Kidney (tissue), 22 donors: ENCODE measurements at regions of chr2 and their contacts with region 1.

Region 1: GRCh38 chr2:19863303-19864041 is 38.3 kb downstream of the TTC32 start:
- DNase-seq: peak; percentile 72 to 89 (median 76)
- H3K4me3 ChIP-seq: peak overlapping the region in 2 of 3 donors; percentile 42 to 48
- H3K27ac ChIP-seq: peak overlapping the region in 1 of 2 donors; percentile 16
- H3K4me1 ChIP-seq: peaks cover 0 to 4% (median 0%) of the 10 kb centered on the region in 3 donors
- H3K27me3 ChIP-seq: no peaks in the 10 kb centered on the region
- CTCF ChIP-seq: peak; percentile 93

Region 2: DNA sequence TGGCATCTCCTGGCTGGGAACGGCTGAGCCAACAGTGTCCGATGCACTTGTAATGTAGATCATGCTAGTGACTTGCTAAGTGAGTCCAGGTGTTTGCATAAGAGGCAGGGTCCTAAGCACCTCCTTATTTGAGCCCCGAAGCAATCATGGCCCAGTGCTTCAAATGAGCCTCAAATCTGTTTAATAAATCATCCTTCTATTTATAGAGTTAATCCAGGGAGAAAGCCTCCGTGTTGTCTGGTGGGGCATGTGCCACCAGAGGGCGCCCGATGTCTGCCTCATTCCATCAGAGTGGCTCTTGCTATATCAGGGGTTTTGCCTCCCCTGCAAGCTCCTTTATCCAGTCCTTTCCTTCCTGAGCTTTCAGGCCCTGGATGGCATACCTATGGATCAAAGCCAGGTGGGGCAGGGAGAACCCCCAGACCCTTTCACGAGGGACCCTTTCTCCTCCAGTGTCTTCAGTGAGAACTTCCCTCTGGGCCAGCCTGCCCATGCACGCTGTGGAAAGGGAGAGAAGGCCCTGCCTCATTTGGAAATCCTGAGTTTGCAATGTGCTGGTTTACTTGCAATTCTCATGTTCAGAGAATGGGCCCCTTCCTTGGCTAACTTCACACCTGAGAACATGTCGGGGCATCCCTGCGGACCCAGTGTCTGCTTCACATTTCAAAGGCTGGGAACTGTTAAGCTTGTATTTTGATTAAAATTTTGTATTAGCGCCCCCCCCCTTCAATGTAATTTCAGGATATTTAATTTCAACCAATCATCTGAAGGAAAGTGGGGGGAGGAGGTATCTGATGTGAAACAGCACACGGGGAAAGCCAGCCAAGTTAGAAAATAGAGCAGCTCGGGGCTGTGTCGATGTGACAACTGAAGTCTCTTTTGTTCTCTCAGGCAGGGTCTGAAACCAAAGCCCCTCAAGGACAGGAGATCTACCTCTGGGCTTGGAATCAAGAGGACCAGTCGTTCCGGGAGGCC is 1342.7 kb before region 1 on chr2:
- intact Hi-C with region 1: loop called (anchors 5 kb)
- DNase-seq: peak; percentile 87 to 93 (median 91)
- H3K4me3 ChIP-seq: no peak overlapping the region
- H3K27ac ChIP-seq: no peak overlapping the region
- H3K4me1 ChIP-seq: peaks cover 0 to 5% (median 0%) of the 10 kb centered on the region in 3 donors
- H3K27me3 ChIP-seq: no peaks in the 10 kb centered on the region
- CTCF ChIP-seq: peak; percentile 86

Region 3: DNA sequence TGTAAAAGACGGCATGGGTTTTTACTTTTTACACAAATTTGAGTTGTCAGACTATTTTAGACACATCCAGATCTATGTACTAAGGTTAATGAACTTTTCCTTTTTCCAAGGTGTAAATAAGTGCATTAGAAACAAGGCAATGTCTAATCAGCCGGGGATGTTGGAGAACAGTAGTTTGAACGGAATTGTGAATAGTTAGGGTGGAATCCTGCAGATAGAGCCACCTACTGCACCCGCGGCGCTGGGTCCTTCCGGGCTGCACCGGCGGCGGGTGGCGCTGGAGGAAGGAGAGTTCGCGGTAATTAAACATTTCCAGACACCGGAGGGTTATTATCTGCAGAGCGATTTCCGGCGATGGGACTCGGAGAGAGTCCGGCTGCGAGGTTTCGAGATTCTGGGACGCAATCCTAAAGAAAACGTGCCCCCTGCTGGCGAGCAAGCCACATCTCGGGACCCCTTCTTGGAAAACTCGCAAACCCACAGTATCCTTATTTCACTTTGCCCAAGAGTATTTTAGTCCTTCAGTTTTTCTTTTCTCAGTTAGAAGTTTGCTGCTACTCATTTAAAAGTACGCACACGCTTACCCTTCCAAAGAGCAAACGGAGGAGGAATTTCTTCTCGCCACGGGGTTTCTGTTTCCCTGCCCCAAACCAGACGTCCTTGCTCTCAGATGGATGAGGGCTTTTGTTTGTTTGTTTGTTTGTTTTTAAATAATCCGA is 500.6 kb before region 1 on chr2:
- intact Hi-C with region 1: loop called (anchors 10 kb)
- DNase-seq: peak; percentile 88 to 96 (median 91)
- H3K4me3 ChIP-seq: peak overlapping the region; percentile 71 to 99 (median 89)
- H3K27ac ChIP-seq: peak overlapping the region in 1 of 2 donors; percentile 35
- H3K4me1 ChIP-seq: peaks cover 0 to 12% (median 0%) of the 10 kb centered on the region in 3 donors
- H3K27me3 ChIP-seq: peaks cover 34% of the 10 kb centered on the region
- CTCF ChIP-seq: peak; percentile 75